Ascending aorta (tissue), 2 donors: ENCODE measurements at regions of chr19 and their contacts with region 1.

Region 1: GRCh38 chr19:7943444-7944176 is at the start of gene TIMM44:
- DNase-seq: peak; percentile 98 to 100
- H3K4me3 ChIP-seq: peak within 1 kb of the TSS; percentile 58 to 81
- H3K27ac ChIP-seq: peak within 1 kb of the TSS; percentile 91 to 93
- H3K4me1 ChIP-seq: peaks cover 0 to 13% of the 10 kb centered on the region in 2 donors
- H3K27me3 ChIP-seq: no peaks in the 10 kb centered on the region
- CTCF ChIP-seq: no peak
- total RNA-seq, gene TIMM44: 151 TPM

Region 2: DNA sequence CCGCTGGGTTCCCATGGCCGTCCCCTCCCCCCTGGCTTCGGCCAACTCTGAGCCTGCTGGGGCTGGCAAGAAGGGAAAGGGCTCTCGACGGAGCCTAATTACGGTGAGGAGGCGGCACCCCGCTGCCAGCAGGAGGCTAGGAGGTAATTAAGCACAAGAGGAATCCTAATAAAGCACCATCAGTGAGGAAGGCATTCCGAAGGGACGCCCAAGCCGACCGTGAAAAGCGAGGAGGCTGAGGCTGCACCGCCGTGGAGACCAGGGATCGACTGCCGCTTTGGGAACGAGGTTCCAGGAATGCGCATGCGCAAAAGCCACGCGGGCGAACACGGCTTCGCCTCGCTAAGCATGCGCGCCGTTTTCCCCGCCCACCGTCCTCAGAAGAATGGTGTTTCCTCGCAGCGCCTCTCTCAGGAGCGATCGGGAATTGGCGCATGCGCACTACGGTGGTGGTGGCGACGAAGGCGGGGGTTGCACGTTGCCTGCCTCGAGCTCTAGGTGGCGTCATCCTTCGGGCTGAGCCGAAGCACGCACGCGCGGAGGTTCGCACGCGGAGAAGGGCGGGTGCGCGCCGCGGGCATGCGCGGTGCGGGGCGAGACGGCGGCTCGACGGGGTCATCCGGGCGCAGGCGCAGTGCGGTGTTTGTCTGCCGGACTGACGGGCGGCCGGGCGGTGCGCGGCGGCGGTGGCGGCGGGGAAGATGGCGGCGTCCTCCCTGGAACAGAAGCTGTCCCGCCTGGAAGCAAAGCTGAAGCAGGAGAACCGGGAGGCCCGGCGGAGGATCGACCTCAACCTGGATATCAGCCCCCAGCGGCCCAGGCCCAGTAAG is 40.2 kb before region 1 on chr19 and contains the start of gene MAP2K7:
- intact Hi-C with region 1: loop called (anchors 1 kb)
- DNase-seq: peak; percentile 97 to 100
- H3K4me3 ChIP-seq: peak within 1 kb of the TSS; percentile 75 to 97
- H3K27ac ChIP-seq: peak within 1 kb of the TSS; percentile 77 to 81
- H3K4me1 ChIP-seq: peaks cover 5 to 22% of the 10 kb centered on the region in 2 donors
- H3K27me3 ChIP-seq: no peaks in the 10 kb centered on the region
- CTCF ChIP-seq: peak in 2 of 3 experiments; percentile 55 to 64
- total RNA-seq, gene MAP2K7: 37.3 TPM

Region 3: GRCh38 chr19:7925171-7925851 is 18.3 kb before region 1 on chr19:
- intact Hi-C with region 1: loop called (anchors 1 kb)
- DNase-seq: peak in 1 of 2 donors; percentile 84
- H3K4me3 ChIP-seq: peak overlapping the region; percentile 69 to 73
- H3K27ac ChIP-seq: no peak overlapping the region
- H3K4me1 ChIP-seq: peaks cover 32 to 63% of the 10 kb centered on the region in 2 donors
- H3K27me3 ChIP-seq: no peaks in the 10 kb centered on the region
- CTCF ChIP-seq: peak; percentile 67 to 79 (median 69)

Region 4: DNA sequence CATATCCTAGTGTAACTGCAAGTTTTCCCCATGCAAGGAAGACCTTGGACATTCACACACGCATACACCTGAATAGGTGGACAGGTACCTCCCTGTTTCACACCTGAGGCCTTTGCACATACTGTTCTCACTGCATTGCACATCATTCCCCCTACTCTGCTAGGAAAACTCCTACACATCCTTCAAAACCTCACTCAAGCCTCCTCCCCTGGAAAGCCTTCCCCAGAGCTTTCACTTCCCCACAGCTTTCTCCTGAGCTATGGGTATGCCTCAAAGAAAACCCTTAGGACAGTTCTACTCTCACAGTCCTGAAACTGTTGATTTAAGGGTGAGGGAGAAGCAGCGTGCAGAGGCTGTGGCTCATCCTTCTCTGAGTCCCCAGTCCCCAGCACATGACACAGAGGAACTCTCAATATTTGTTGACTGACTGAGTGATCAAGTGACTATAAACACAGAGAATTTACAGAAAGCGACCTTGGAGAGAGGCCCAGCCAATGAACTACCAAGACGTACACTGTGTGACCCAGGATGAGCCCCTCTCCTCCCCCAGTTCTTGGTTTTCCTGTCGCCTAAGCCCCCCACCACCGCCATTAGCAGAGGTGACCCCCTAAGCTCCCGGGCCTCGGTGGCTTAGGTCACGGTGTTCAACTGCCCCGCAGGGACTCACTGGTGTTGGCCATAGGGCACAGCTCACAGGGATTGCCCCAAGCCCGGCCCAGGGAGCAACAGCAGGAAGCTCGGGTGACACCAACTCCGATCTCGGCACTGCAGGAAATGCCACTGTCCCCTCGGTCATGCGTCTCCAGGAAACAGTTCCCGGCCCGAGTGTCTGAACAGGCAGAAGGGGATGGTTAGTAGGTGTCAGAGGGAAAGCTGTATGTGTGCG is 165.2 kb after region 1 on chr19:
- intact Hi-C with region 1: no loop called
- DNase-seq: no peak
- H3K4me3 ChIP-seq: no peak overlapping the region
- H3K27ac ChIP-seq: no peak overlapping the region
- H3K4me1 ChIP-seq: no peaks in the 10 kb centered on the region
- H3K27me3 ChIP-seq: no peaks in the 10 kb centered on the region
- CTCF ChIP-seq: no peak